Right ventricle myocardium inferior (tissue), 1 donor: ENCODE measurements at regions of chr10 and their contacts with region 1.

Region 1: GRCh38 chr10:71893920-71894319 is 42.9 kb upstream of the PSAP start:
- DNase-seq: no peak
- ATAC-seq: no peak

Region 2: DNA sequence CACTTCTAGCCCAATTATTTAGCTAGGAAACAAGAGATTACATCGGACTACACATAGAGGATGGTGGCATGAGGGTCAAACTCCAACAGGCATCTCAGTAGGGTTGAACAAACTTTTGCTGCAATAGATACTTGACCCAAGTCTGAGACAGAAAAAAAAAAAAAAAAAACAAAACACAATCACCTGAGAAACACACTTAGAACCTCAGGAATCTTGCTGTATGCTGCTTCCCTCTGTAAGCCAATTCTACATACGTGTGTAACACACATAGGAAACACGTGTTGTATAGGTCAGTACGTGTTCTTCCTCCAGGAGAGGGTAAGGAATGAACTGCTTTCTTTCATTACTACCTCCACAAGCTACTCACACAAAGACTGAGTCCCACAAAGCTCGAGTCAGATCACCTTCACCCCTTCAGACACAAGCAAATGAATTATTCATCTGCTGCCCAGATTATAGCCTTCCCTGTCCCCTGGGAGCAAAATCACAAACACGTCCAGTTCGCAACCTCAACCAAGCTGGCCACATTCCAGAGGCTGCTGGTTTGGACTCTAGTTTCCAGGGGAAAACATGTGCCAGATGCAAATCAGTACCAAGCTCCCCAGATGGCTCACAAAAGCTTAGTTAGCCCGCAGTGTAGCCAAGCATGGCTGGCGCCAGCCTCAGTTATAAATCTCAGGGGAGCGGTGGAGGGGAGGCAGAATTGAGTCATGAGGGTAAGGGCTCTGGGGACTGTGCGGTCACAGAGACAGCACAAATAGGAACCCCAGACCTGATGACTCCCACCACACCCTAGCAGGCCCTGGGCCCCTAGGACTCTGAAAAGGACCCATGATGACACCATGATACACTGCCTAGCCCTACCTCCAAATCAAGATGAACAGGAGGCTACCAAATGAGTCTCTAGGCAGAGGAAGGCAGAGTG is 58.0 kb before region 1 on chr10:
- intact Hi-C with region 1: loop called (anchors 10 kb)
- DNase-seq: peak; percentile 80
- ATAC-seq: peak; percentile 58

Region 3: DNA sequence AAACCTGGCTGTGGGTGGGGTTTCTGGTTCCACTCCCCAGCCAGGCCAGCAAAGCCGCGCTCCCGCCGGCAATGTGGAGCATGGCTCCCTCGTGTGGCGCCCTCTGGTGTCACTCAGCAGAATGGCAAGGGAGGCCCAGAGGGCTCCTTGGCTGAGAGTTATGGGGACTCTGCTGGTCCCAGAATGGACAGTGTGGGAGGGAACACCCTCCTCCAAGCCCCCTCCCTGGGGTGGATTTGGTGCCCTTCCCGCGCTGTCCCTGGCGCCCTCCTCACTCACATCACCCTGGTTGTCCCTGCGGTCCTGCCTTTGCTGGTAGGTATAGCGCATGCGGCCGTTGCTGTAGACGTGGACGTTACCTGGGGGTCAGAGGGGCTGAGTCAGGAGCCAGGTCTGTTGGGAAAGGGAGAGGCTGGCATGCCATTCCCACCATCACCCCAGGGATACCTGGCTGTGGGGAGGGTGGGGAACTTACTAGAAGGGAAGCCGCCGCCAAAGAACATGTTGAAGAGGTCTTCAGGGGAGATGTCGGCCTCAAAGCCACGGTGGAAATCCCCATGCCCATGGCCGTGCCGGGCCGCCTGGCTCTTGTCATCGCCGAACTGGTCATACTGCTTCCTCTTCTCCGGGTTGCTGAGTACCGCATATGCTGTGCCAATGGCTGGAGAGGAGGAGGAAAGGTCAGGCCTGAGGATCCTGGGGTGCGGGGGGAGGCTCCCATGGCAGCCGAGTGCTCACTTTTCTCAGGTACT is 446.8 kb after region 1 on chr10:
- intact Hi-C with region 1: loop called (anchors 10 kb)
- DNase-seq: peak; percentile 92
- ATAC-seq: peak; percentile 29